ENCODE measurements at regions of chr5 and their contacts with region 1.

Region 1: GRCh38 chr5:16525651-16526050 is 60.1 kb upstream of the ZNF622 start:
- DNase-seq: no peak
- H3K4me3 ChIP-seq: no peak overlapping the region
- H3K27ac ChIP-seq: no peak overlapping the region
- H3K4me1 ChIP-seq: no peaks in the 10 kb centered on the region
- H3K27me3 ChIP-seq: no peaks in the 10 kb centered on the region
- CTCF ChIP-seq: no peak
- EP300 ChIP-seq: no peak
- POLR2A ChIP-seq: no peak

Region 2: DNA sequence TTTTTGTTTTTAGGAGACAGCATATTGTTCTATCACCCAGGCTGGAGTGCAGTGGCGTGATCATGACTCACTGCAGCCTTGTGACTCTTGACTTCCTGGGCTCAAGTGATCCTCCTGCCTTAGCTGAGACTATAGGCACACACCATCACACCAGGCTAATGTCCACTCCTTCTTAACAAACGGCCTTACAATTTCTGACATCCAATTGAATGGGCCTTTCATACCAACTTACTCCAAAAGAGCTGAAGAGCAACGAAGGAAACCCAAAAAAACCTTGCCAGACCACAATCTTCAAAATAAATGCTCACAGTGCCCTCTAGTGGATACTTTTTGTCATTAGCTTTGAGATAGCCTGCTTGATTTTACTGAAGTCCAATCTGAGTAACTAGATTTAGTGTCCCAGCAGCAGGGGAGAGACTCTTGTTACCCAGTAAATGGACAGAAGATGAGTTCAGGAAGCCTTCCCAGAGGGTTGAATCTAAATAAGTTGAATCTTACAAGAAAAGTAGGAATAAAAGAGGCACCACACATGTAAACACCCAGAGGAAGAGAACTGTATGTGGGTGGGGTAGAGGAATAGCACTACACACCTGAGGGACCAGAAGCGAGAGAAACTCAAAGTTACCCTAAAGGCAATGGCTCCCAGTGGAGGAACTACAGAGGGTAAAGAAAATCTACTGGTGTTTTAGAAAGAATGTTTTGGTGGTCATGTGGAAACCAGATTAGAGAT is 69.4 kb before region 1 on chr5:
- intact Hi-C with region 1: no loop called
- DNase-seq: peak in 2 of 5 donors; percentile 13 to 26
- H3K4me3 ChIP-seq: no peak overlapping the region
- H3K27ac ChIP-seq: no peak overlapping the region
- H3K4me1 ChIP-seq: peaks cover 2% of the 10 kb centered on the region
- H3K27me3 ChIP-seq: no peaks in the 10 kb centered on the region
- CTCF ChIP-seq: peak; percentile 46 to 60 (median 51)
- EP300 ChIP-seq: no peak
- POLR2A ChIP-seq: no peak

Region 3: GRCh38 chr5:16561660-16562059 is 36.0 kb after region 1 on chr5:
- intact Hi-C with region 1: loop called in 1 of 4 experiments (anchors 2 kb)
- DNase-seq: no peak
- H3K4me3 ChIP-seq: no peak overlapping the region
- H3K27ac ChIP-seq: no peak overlapping the region
- H3K4me1 ChIP-seq: no peaks in the 10 kb centered on the region
- H3K27me3 ChIP-seq: no peaks in the 10 kb centered on the region
- CTCF ChIP-seq: no peak
- EP300 ChIP-seq: no peak
- POLR2A ChIP-seq: no peak

Region 4: DNA sequence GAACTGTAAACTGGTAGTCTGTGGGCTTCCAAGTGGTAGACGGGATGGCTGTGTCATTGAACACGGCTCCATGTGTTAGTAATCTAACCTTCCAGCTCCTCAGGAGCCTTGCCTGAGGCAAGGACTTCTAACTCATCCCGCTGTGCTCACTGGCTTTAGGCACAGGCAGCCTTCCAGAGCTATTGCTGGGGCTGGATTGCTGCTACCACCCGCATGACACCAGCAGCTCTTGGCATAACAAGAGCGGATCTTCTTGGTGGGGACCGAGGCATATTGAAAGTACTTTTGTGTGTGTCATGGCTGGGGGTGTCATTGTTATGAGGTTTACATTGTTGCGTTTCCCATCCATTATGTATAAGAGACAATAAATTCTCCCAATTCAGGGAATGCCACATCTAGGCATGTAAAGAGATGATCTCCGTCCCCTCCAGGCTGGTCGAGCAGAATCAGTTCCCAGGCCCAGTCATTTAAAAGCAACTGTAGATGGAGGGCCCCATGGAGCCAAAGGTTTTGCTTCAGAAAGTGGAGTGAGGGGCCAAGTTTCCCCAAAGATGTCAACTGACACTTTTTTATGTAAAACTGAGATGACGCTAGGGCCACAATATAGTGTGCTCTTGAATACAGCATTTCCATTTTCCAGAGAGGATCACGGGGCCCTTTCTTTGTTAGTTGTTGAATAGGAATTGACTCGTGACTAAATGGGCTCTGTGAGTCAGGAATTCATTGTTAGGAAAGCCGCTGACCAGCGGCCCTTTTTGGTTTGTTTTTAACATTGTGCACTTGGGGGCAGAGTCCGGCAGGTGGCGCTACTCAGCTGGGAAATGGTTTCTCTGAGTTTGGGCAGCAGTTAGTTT is 1868.2 kb after region 1 on chr5:
- intact Hi-C with region 1: no loop called
- DNase-seq: peak in 2 of 5 donors; percentile 18 to 43
- H3K4me3 ChIP-seq: no peak overlapping the region
- H3K27ac ChIP-seq: no peak overlapping the region
- H3K4me1 ChIP-seq: no peaks in the 10 kb centered on the region
- H3K27me3 ChIP-seq: no peaks in the 10 kb centered on the region
- CTCF ChIP-seq: no peak
- EP300 ChIP-seq: no peak
- POLR2A ChIP-seq: no peak